ENCODE measurements at regions of chr4 and their contacts with region 1.

Region 1: GRCh38 chr4:2963175-2963965 is at the starts of genes GRK4 and NOP14:
- DNase-seq: peak; percentile 95 to 98 (median 98)
- H3K4me3 ChIP-seq: peak within 1 kb of the TSS; percentile 39 to 68
- H3K4me3 Mint-ChIP-seq: peak within 1 kb of the TSS; percentile 78 to 93 (median 91)
- H3K27ac ChIP-seq: peak within 1 kb of the TSS; percentile 83
- H3K27ac Mint-ChIP-seq: peak within 1 kb of the TSS; percentile 91 to 95 (median 93)
- H3K4me1 ChIP-seq: peaks cover 42% of the 10 kb centered on the region
- H3K4me1 Mint-ChIP-seq: peaks cover 28 to 54% (median 36%) of the 10 kb centered on the region in 4 donors
- H3K27me3 ChIP-seq: no peaks in the 10 kb centered on the region
- H3K27me3 Mint-ChIP-seq: no peaks in the 10 kb centered on the region
- total RNA-seq, gene GRK4: 2.8 to 3.2 TPM
- total RNA-seq, gene NOP14: 41.3 to 41.4 TPM

Region 2: GRCh38 chr4:2418650-2419571 is 544.5 kb before region 1 on chr4 and contains the start of gene CFAP99:
- CTCF ChIA-PET with region 1: no interaction called
- POLR2A ChIA-PET with region 1: no interaction called
- intact Hi-C with region 1: loop called (anchors 1 kb)
- DNase-seq: peak; percentile 96 to 99 (median 97)
- H3K4me3 ChIP-seq: peak within 1 kb of the TSS; percentile 44 to 72
- H3K4me3 Mint-ChIP-seq: peak within 1 kb of the TSS; percentile 89 to 95 (median 92)
- H3K27ac ChIP-seq: peak within 1 kb of the TSS; percentile 78
- H3K27ac Mint-ChIP-seq: peak within 1 kb of the TSS; percentile 92 to 100 (median 98)
- H3K4me1 ChIP-seq: peaks cover 39% of the 10 kb centered on the region
- H3K4me1 Mint-ChIP-seq: peaks cover 29 to 48% (median 36%) of the 10 kb centered on the region in 4 donors
- H3K27me3 ChIP-seq: no peaks in the 10 kb centered on the region
- H3K27me3 Mint-ChIP-seq: no peaks in the 10 kb centered on the region
- total RNA-seq, gene CFAP99: 0.12 to 0.19 TPM

Region 3: DNA sequence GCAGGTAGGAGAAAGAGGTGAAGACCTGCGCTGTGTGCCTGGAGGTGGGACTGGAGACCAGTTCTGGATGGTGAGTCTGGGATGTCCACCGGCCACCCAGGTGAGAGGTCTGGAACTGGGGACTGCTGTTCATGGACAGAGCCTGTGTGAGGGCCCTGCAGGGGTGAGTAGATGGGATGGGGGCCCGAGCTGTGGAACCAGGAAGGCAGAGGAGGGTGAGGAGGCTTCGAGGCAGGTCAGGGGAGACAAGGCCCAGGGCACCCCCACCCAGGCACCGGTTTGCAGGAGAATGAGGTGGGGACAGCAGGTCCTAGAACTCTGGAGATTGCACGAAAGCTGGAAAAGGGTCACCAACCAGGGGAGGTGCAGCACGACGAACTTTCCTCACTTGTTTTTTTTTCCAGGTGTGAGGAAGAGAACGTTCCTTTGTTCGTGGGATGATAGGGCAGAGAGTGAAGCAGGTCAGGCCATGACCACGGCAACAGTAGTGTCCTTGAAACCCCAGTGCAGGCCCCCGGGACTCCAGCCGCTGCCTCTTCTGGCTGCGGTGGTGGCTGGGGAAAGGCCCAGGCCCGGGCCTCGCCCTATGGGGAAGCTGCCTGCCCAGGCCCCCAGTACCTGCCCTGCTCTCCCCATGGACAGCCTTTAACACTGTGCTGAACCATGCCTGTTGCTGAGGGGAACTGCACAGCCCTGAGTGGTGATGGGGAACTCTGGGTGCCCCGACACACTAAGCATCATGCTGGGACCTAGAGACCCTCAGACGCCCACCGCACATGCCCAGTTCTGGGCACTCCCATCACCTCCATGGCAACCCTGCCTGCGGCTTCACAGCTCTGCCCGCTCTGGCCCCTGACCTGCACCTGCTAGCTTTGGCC is 230.1 kb before region 1 on chr4:
- CTCF ChIA-PET with region 1: no interaction called
- POLR2A ChIA-PET with region 1: no interaction called
- intact Hi-C with region 1: no loop called
- DNase-seq: no peak
- H3K4me3 ChIP-seq: no peak overlapping the region
- H3K4me3 Mint-ChIP-seq: no peak overlapping the region
- H3K27ac ChIP-seq: no peak overlapping the region
- H3K27ac Mint-ChIP-seq: peak overlapping the region in 3 of 7 donors; percentile 29 to 87 (median 84)
- H3K4me1 ChIP-seq: no peaks in the 10 kb centered on the region
- H3K4me1 Mint-ChIP-seq: peaks cover 0 to 1% (median under 1%) of the 10 kb centered on the region in 4 donors
- H3K27me3 ChIP-seq: no peaks in the 10 kb centered on the region
- H3K27me3 Mint-ChIP-seq: no peaks in the 10 kb centered on the region

Region 4: GRCh38 chr4:2755837-2756694 is 207.3 kb before region 1 on chr4 and contains the start of gene TNIP2:
- CTCF ChIA-PET with region 1: interaction called, 4 read pairs
- POLR2A ChIA-PET with region 1: interaction called, 7 read pairs
- intact Hi-C with region 1: loop called (anchors 2 kb)
- DNase-seq: peak; percentile 77 to 85 (median 81)
- H3K4me3 ChIP-seq: peak within 1 kb of the TSS; percentile 25 to 68
- H3K4me3 Mint-ChIP-seq: peak within 1 kb of the TSS; percentile 75 to 89 (median 86)
- H3K27ac ChIP-seq: peak within 1 kb of the TSS; percentile 83
- H3K27ac Mint-ChIP-seq: peak within 1 kb of the TSS; percentile 68 to 93 (median 85)
- H3K4me1 ChIP-seq: peaks cover 25% of the 10 kb centered on the region
- H3K4me1 Mint-ChIP-seq: peaks cover 18 to 39% (median 29%) of the 10 kb centered on the region in 4 donors
- H3K27me3 ChIP-seq: no peaks in the 10 kb centered on the region
- H3K27me3 Mint-ChIP-seq: no peaks in the 10 kb centered on the region
- total RNA-seq, gene TNIP2: 50.0 to 50.5 TPM

Region 5: GRCh38 chr4:2825740-2826139 is 137.6 kb before region 1 on chr4:
- CTCF ChIA-PET with region 1: no interaction called
- POLR2A ChIA-PET with region 1: no interaction called
- intact Hi-C with region 1: no loop called
- DNase-seq: no peak
- H3K4me3 ChIP-seq: no peak overlapping the region
- H3K4me3 Mint-ChIP-seq: no peak overlapping the region
- H3K27ac ChIP-seq: no peak overlapping the region
- H3K27ac Mint-ChIP-seq: peak overlapping the region in 2 of 7 donors; percentile 36 to 73
- H3K4me1 ChIP-seq: no peaks in the 10 kb centered on the region
- H3K4me1 Mint-ChIP-seq: peaks cover 0 to 11% (median 5%) of the 10 kb centered on the region in 4 donors
- H3K27me3 ChIP-seq: no peaks in the 10 kb centered on the region
- H3K27me3 Mint-ChIP-seq: no peaks in the 10 kb centered on the region

Region 6: DNA sequence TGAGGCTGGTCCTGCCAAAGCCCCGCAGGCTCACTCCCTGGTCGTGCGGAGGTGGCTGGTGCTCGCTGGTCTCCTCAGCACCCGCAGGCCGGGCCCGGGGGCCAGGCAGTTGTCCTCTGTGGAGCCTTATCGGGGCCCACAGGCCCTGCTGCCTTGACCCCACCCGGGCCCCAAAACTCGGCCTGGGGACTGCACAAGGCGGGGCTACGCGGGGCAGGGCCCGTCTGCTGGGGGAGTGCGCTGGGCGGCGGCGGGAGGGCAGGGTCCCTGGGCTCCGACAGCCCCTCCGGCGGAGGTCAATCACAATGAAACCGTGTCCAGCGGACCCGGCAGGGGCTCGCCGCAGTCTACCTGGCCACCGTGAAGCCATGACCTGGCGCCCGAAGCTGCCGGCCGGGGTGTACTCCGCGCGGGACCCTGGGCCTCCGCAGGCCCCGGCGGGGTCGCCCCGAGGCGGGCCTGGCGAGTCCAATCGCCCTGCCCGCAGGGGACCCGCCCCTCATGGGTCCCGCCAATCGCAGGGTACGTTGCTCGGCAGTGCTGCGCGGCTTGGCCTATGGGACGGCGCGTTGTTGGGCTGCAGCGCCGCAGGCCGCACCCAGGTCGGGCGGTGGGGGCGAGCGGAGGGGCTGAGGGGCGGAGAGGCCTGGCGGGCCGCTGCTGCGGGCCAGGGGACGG is 120.0 kb before region 1 on chr4 and contains the start of gene ADD1:
- CTCF ChIA-PET with region 1: no interaction called
- POLR2A ChIA-PET with region 1: interaction called, 8 read pairs
- intact Hi-C with region 1: loop called (anchors 1 kb)
- DNase-seq: peak; percentile 87 to 99 (median 93)
- H3K4me3 ChIP-seq: peak within 1 kb of the TSS; percentile 72 to 81
- H3K4me3 Mint-ChIP-seq: peak within 1 kb of the TSS; percentile 90 to 98 (median 94)
- H3K27ac ChIP-seq: peak within 1 kb of the TSS; percentile 84
- H3K27ac Mint-ChIP-seq: peak within 1 kb of the TSS; percentile 93 to 97 (median 95)
- H3K4me1 ChIP-seq: peaks cover 71% of the 10 kb centered on the region
- H3K4me1 Mint-ChIP-seq: peaks cover 37 to 72% (median 45%) of the 10 kb centered on the region in 4 donors
- H3K27me3 ChIP-seq: no peaks in the 10 kb centered on the region
- H3K27me3 Mint-ChIP-seq: no peaks in the 10 kb centered on the region
- total RNA-seq, gene ADD1: 289 to 293 TPM

Region 7: DNA sequence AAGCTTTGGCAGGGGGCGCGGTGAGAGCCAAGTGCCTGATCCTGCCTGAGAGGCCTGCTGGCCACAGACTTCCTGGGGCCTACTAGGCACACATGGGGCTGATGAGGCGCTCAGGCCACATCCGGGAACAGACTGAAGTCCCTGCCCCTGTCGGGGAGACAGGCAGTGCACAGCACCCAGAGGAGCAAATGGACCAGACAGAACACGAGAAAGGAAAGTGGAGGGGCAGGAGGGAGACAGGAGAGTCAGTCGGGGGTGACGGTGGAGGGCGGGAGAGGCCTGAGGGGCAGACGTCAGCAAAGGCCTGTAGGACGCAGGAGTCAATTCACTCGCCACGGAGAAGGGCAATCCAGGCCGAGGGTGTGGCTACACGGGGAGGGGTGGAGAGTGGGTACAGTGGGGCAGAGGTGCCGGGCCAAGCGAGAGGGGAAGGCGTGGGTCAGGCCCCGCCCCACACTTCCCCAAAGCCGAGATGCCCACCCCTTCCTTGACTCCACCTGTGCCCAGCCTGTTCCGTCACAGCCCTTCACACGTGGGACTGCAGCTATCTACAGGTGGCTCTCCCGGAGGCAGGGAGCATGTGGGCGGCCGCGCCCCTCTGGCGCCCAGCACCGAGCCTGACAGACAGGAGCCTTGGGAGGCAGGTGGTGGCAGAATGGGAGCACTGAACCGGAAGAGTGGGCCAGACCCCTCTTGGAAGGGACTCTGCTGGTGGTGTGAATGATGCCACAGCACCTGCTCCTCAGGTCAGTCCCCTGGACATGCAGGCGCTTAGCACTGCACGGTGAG is 20.6 kb before region 1 on chr4:
- CTCF ChIA-PET with region 1: no interaction called
- POLR2A ChIA-PET with region 1: interaction called, 82 read pairs
- intact Hi-C with region 1: loop called (anchors 2 kb)
- DNase-seq: peak in 4 of 5 donors; percentile 17 to 57 (median 24)
- H3K4me3 ChIP-seq: no peak overlapping the region
- H3K4me3 Mint-ChIP-seq: peak overlapping the region in 4 of 8 donors; percentile 1 to 36 (median 34)
- H3K27ac ChIP-seq: peak overlapping the region; percentile 25
- H3K27ac Mint-ChIP-seq: peak overlapping the region in 6 of 7 donors; percentile 39 to 92 (median 80)
- H3K4me1 ChIP-seq: peaks cover 3% of the 10 kb centered on the region
- H3K4me1 Mint-ChIP-seq: peaks cover 9 to 25% (median 15%) of the 10 kb centered on the region in 4 donors
- H3K27me3 ChIP-seq: no peaks in the 10 kb centered on the region
- H3K27me3 Mint-ChIP-seq: no peaks in the 10 kb centered on the region

Region 8: GRCh38 chr4:2977211-2978088 is 14.1 kb after region 1 on chr4:
- CTCF ChIA-PET with region 1: interaction called, 10 read pairs
- POLR2A ChIA-PET with region 1: interaction called, 5 read pairs
- intact Hi-C with region 1: no loop called
- DNase-seq: no peak
- H3K4me3 ChIP-seq: no peak overlapping the region
- H3K4me3 Mint-ChIP-seq: no peak overlapping the region
- H3K27ac ChIP-seq: no peak overlapping the region
- H3K27ac Mint-ChIP-seq: no peak overlapping the region
- H3K4me1 ChIP-seq: no peaks in the 10 kb centered on the region
- H3K4me1 Mint-ChIP-seq: peaks cover 0 to 4% (median 2%) of the 10 kb centered on the region in 4 donors
- H3K27me3 ChIP-seq: no peaks in the 10 kb centered on the region
- H3K27me3 Mint-ChIP-seq: peaks cover 0 to 2% of the 10 kb centered on the region in 2 donors

Region 9: GRCh38 chr4:3074078-3074795 is 110.9 kb after region 1 on chr4 and contains the starts of genes HTT and HTT-AS:
- CTCF ChIA-PET with region 1: no interaction called
- POLR2A ChIA-PET with region 1: interaction called, 7 read pairs
- intact Hi-C with region 1: loop called (anchors 1 kb)
- DNase-seq: peak; percentile 94 to 99 (median 96)
- H3K4me3 ChIP-seq: peak within 1 kb of the TSS; percentile 65 to 87
- H3K4me3 Mint-ChIP-seq: peak within 1 kb of the TSS; percentile 87 to 96 (median 92)
- H3K27ac ChIP-seq: peak within 1 kb of the TSS; percentile 75
- H3K27ac Mint-ChIP-seq: peak within 1 kb of the TSS; percentile 84 to 97 (median 95)
- H3K4me1 ChIP-seq: peaks cover 29% of the 10 kb centered on the region
- H3K4me1 Mint-ChIP-seq: peaks cover 18 to 32% (median 24%) of the 10 kb centered on the region in 4 donors
- H3K27me3 ChIP-seq: no peaks in the 10 kb centered on the region
- H3K27me3 Mint-ChIP-seq: no peaks in the 10 kb centered on the region
- total RNA-seq, gene HTT: 62.2 to 67.7 TPM
- total RNA-seq, gene HTT-AS: not detected